HCT116 (cell line): ENCODE measurements at regions of chr15 and their contacts with region 1.

Region 1: DNA sequence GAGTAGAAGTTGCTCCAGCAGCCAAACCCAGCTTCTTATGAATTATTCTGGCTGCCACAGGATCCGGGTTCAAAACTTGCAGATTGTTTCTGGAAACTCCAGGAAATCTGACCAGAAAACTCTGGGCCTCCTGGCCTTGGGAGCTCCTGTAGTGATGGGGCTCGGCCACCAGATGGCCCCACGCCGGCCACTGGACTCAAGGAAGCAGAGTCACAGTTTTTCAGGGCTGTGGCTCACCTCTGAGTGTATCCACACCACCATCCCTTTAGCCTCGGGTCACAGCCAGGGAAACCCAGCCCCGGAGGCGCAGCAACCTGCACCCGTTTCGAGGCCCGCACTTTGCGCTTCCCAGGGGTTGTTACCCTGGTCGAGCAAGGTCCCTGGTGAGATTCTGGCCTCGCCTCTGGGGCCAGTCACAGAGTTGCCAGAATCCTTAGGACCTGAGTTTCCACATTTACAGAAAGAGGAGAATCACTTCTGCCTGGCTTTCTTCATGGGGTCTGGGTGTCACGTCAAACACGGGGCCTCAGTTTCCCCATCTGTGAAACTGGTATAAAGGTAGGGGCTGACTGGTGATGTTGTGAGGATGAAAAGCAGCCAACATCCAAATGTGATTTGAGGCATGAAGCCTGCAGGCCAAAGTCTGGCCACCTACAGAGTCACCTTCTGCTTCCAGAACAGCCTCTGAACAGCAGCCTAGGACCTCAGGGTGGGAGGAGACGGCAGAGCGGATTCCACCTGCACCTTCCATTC is 53.5 kb upstream of the LCTL start:
- DNase-seq: peak; percentile 49
- ATAC-seq: peak; percentile 96
- H3K4me3 ChIP-seq: no peak overlapping the region
- H3K27ac ChIP-seq: no peak overlapping the region
- H3K4me1 ChIP-seq: peaks cover 6 to 25% of the 10 kb centered on the region in 2 experiments; a peak in 3 of 4 replicates
- H3K27me3 ChIP-seq: no peaks in the 10 kb centered on the region
- CTCF ChIP-seq: peak; percentile 88 to 95 (median 90)
- POLR2A ChIP-seq: no peak
- RAD21 ChIP-seq: peak; percentile 81

Region 2: DNA sequence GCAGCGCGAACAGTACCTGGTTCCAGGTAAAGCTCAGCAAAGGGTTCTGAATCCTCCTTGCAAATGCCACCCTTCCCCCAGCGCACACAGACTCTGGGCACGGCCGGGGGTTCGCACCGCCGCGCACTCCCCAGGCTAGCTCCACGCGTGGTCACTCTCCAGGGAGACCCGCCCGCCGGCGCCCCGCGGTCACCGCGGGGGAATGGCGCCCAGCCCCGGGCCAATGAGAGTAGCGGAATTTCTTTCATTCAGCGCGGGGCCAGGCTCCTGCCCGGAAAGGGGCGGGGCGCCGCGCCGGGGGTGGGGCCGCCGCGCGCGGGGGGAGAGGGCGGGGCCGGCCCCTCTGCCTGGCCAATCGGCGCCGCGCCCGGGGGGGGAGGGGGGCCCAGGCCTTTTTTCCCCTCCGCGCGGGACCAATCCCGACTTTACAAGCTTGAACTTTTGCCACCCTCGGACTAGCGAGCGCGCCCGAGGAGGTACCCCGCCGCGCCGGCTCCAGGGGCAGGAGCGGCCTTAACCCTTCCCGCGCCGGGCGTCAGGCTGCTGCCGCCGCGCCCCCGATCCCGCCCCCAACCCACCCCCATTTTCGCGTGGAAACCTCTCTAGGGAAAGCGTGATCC is 81.6 kb after region 1 on chr15:
- CTCF ChIA-PET with region 1: interaction called, 8 read pairs
- POLR2A ChIA-PET with region 1: no interaction called
- RAD21 ChIA-PET with region 1: interaction called, 3 read pairs
- intact Hi-C with region 1: loop called (anchors 1 kb)
- DNase-seq: peak; percentile 87
- ATAC-seq: peak; percentile 70
- H3K4me3 ChIP-seq: peak overlapping the region; percentile 55 to 74
- H3K27ac ChIP-seq: peak overlapping the region; percentile 79
- H3K4me1 ChIP-seq: peaks cover 27 to 62% of the 10 kb centered on the region in 2 experiments
- H3K27me3 ChIP-seq: no peaks in the 10 kb centered on the region
- CTCF ChIP-seq: no peak
- POLR2A ChIP-seq: no peak
- RAD21 ChIP-seq: no peak

Region 3: DNA sequence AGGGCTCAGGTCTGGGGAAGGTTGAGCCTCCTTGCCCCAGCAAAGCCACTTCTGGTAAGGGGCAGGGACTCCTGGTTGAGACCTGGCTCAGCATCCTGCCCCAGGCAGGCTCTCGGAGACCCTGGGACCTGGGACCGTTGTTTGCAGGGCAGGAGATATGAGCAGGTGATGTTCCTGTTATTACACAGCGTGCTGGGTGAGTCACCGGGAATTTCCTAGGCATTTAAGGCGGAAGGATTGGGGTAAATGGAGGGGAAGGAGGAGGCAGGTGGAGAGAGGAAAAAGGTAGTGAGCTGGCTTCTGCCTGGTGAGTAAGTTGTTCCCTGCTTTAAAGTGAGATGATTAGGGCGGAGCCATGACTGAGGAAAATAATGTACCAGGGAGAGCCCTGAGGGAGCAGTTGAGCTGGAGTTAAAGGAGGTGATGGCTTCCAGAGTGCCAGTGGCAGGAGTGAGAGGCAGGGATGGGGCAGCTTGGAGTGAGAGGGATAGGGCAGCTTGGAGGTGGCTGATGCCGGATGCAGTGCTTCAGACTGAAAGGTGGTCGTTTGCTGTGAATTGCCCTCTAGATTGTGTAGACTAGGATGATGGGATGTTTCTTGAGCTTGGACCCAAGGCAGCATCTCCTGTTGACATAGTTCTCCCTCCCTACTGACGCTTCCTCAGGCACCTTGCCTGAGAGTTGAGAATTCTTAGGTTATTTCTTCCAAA is 555.7 kb after region 1 on chr15:
- CTCF ChIA-PET with region 1: no interaction called
- POLR2A ChIA-PET with region 1: no interaction called
- RAD21 ChIA-PET with region 1: no interaction called
- intact Hi-C with region 1: no loop called
- DNase-seq: peak; percentile 94
- ATAC-seq: peak; percentile 91
- H3K4me3 ChIP-seq: 0 out of 4 replicates have a peak overlapping the region, but pooled peaks of 1 of the 2 experiments have one; percentile 15
- H3K27ac ChIP-seq: peak overlapping the region; percentile 70
- H3K4me1 ChIP-seq: peaks cover 28 to 76% of the 10 kb centered on the region in 2 experiments
- H3K27me3 ChIP-seq: no peaks in the 10 kb centered on the region
- CTCF ChIP-seq: no peak
- POLR2A ChIP-seq: no peak
- RAD21 ChIP-seq: peak; percentile 54

Region 4: DNA sequence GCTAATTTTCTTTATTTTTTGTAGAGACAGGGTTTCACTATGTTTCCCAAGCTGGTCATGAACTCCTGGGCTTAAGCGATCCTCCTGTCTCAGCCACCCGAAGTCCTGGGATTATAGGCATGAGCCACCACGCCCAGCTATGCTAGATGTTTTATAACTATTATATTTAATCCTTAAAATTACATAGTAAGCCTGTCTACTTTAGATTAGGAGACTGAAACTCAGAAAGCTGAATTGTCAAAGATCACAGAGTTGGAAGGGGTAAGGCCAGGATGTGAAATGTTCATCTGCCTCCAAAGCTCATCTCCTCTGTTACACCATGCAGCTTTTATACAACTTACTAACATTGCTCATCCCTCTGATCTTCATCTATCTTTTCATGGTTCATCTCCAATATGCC is 1012.9 kb after region 1 on chr15:
- CTCF ChIA-PET with region 1: no interaction called
- POLR2A ChIA-PET with region 1: no interaction called
- RAD21 ChIA-PET with region 1: no interaction called
- intact Hi-C with region 1: no loop called
- DNase-seq: no peak
- ATAC-seq: no peak
- H3K4me3 ChIP-seq: no peak overlapping the region
- H3K27ac ChIP-seq: no peak overlapping the region
- H3K4me1 ChIP-seq: no peaks in the 10 kb centered on the region
- H3K27me3 ChIP-seq: no peaks in the 10 kb centered on the region
- CTCF ChIP-seq: no peak
- POLR2A ChIP-seq: no peak
- RAD21 ChIP-seq: no peak